ENCODE measurements at regions of chr2 and their contacts with region 1.

Region 1: GRCh38 chr2:173749315-173749714 is 215.9 kb downstream of the SP3 start:
- DNase-seq: no peak
- H3K4me3 ChIP-seq: no peak overlapping the region
- H3K27me3 ChIP-seq: peaks cover 5% of the 10 kb centered on the region
- CTCF ChIP-seq: peak; percentile 56

Region 2: DNA sequence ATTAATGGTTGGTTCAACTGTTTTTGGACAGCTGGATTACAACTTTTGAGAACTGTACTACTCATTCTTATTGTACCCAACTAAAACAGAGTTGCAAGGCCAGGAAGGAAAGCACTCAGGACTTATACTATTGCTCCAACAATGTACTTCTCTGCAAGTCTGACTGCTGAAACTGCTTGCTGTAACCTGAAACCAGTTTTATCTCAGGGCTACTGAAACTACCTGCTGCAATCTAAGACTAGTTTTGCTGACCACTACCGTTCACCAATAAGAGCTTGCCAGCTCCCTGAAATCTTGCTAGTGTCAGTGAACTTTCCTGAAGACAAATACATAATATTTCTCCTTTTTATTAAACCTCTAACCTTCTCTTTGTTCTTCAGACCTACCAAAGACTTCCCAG is 237.4 kb before region 1 on chr2:
- CTCF ChIA-PET with region 1: no interaction called
- POLR2A ChIA-PET with region 1: no interaction called
- DNase-seq: no peak
- H3K4me3 ChIP-seq: no peak overlapping the region
- H3K27me3 ChIP-seq: peaks cover 6% of the 10 kb centered on the region
- CTCF ChIP-seq: no peak

Region 3: GRCh38 chr2:173574324-173575112 is 174.8 kb before region 1 on chr2:
- CTCF ChIA-PET with region 1: interaction called, 11 read pairs
- POLR2A ChIA-PET with region 1: no interaction called
- DNase-seq: no peak
- H3K4me3 ChIP-seq: no peak overlapping the region
- H3K27me3 ChIP-seq: no peaks in the 10 kb centered on the region
- CTCF ChIP-seq: no peak

Region 4: GRCh38 chr2:173770958-173771678 is 21.8 kb after region 1 on chr2:
- CTCF ChIA-PET with region 1: no interaction called
- POLR2A ChIA-PET with region 1: no interaction called
- DNase-seq: no peak
- H3K4me3 ChIP-seq: no peak overlapping the region
- H3K27me3 ChIP-seq: peaks cover 9% of the 10 kb centered on the region
- CTCF ChIP-seq: no peak